ENCODE measurements at regions of chr12 and their contacts with region 1.

Region 1: GRCh38 chr12:50302686-50303085 is 19.4 kb upstream of the LIMA1 start:
- DNase-seq: no peak
- H3K4me3 ChIP-seq: no peak overlapping the region
- H3K27ac ChIP-seq: no peak overlapping the region
- H3K4me1 ChIP-seq: peaks cover 0 to 7% (median 2%) of the 10 kb centered on the region in 4 donors
- H3K27me3 ChIP-seq: no peaks in the 10 kb centered on the region
- CTCF ChIP-seq: no peak
- EP300 ChIP-seq: no peak
- POLR2A ChIP-seq: no peak

Region 2: DNA sequence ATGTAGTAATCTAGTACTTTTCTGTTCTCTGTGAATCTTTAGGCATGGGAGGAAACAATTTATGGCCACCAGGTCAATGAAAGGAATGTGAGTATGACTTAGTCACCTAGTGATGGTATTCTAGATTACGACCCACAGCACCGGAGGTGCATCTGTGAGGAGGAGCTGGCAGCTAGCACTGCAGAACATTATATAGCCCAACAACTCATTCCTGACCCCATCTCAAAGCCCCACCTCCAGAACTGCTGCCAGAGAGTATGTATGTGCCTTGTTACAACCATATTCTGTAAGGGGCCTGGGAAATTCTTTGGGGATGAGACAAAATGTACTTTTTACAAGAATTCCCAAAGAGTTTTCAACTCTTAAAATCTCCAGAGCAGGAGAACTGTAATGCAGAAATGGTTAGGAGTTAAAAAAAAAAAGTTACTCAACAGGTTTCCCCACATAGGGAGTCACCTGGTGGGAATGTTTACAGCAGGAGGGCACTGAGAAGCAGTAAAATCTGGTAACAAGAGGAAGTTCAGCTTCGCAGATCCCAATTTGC is 100.6 kb before region 1 on chr12:
- in situ Hi-C with region 1: loop called in 2 of 4 experiments (anchors 10 to 25 kb)
- intact Hi-C with region 1: no loop called
- DNase-seq: peak; percentile 36
- H3K4me3 ChIP-seq: no peak overlapping the region
- H3K27ac ChIP-seq: peak overlapping the region; percentile 48 to 83 (median 61)
- H3K4me1 ChIP-seq: peaks cover 0 to 40% (median 15%) of the 10 kb centered on the region in 4 donors
- H3K27me3 ChIP-seq: no peaks in the 10 kb centered on the region
- CTCF ChIP-seq: no peak
- EP300 ChIP-seq: no peak
- POLR2A ChIP-seq: no peak